BJ (cell line): ENCODE measurements at regions of chr1 and their contacts with region 1.

Region 1: GRCh38 chr1:241611063-241611462 is 29.1 kb downstream of the CHML start:
- DNase-seq: no peak
- H3K4me3 ChIP-seq: no peak overlapping the region
- H3K27me3 ChIP-seq: no peaks in the 10 kb centered on the region
- CTCF ChIP-seq: peak; percentile 54

Region 2: DNA sequence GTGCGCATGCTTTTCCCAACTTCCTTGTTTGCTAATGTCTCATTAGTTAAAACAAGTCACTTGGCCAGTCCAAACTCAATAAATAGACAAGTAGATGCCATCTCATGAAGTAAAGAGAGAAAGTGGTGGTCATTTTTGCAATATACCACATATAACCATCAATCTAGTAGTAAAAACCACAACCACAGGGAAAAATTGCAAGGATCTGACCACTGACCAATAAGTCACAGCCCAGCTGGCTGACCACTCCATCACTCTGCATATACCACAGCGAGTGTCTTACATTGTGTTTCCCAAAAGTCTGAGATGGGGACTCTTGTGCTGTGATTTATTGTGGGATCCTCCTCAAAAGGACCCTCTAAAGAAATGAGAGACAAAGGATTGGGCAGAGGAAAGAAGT is 167.5 kb before region 1 on chr1:
- CTCF ChIA-PET with region 1: no interaction called
- POLR2A ChIA-PET with region 1: no interaction called
- DNase-seq: no peak
- H3K4me3 ChIP-seq: no peak overlapping the region
- H3K27me3 ChIP-seq: no peaks in the 10 kb centered on the region
- CTCF ChIP-seq: no peak

Region 3: GRCh38 chr1:241460098-241460873 is 150.8 kb before region 1 on chr1:
- CTCF ChIA-PET with region 1: no interaction called
- POLR2A ChIA-PET with region 1: no interaction called
- DNase-seq: no peak
- H3K4me3 ChIP-seq: no peak overlapping the region
- H3K27me3 ChIP-seq: no peaks in the 10 kb centered on the region
- CTCF ChIP-seq: no peak

Region 4: GRCh38 chr1:241536304-241536703 is 74.8 kb before region 1 on chr1:
- CTCF ChIA-PET with region 1: interaction called, 14 read pairs
- POLR2A ChIA-PET with region 1: no interaction called
- DNase-seq: no peak
- H3K4me3 ChIP-seq: no peak overlapping the region
- H3K27me3 ChIP-seq: no peaks in the 10 kb centered on the region
- CTCF ChIP-seq: no peak

Region 5: DNA sequence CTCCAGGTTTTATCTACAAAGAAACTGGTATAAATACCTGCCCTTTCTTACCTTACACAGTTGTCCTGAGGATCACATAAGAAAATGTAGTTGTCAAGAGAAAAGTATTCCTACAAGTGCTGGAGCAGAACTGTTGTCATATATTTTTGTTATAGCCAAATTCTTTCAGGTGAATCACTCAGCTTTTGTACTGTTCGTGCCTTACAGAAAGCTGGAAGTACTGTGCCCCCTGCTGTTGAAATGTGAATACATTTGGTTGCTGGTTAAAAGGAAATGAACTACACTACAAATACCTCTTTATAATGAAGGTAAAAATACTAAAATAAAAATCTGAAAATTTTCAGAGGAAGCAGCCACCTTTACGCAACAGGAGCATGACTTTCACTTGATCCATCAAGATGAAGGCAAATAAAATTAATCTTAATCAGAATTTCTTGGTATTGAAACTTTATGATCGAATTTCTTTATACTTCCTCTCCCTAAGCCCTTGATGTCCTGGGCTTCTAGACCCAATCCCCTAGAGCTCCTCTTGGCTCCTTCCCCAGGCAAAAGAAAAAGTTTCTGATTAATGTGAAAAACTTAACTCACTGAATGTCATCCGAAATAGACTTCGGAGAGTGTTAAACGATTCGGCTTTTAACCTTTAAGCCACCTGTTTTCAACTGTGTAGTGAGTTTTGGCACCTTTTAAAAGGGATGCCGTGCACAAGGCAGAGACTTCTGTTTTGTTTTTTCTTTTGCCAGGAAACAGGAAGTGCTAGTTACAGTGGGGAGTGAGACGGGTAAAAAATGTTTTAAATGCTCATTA is 16.6 kb after region 1 on chr1:
- CTCF ChIA-PET with region 1: interaction called, 24 read pairs
- POLR2A ChIA-PET with region 1: no interaction called
- DNase-seq: no peak
- H3K4me3 ChIP-seq: no peak overlapping the region
- H3K27me3 ChIP-seq: no peaks in the 10 kb centered on the region
- CTCF ChIP-seq: peak; percentile 71

Region 6: DNA sequence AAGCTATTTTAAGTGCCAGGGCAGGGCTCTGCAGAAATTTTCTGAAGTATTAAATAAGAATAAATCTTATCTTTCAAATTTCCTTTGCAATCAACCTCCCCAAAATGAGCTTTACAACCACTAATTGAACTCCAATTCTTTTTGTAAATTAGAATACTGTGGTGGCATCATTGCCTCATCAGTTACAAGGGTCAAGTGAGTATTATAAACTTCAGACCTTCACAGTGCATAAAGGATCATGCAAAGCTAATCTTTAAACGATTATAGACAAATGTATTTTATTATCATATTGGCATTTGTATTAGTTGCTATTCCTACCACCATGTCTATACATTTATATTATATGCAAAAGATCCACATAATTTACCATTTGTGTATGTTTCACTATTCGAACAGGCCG is 21.9 kb after region 1 on chr1:
- CTCF ChIA-PET with region 1: interaction called, 24 read pairs
- POLR2A ChIA-PET with region 1: no interaction called
- DNase-seq: no peak
- H3K4me3 ChIP-seq: no peak overlapping the region
- H3K27me3 ChIP-seq: no peaks in the 10 kb centered on the region
- CTCF ChIP-seq: no peak

Region 7: GRCh38 chr1:241722947-241723346 is 111.9 kb after region 1 on chr1:
- CTCF ChIA-PET with region 1: no interaction called
- POLR2A ChIA-PET with region 1: no interaction called
- DNase-seq: no peak
- H3K4me3 ChIP-seq: no peak overlapping the region
- H3K27me3 ChIP-seq: peaks cover 2% of the 10 kb centered on the region; the same call in 1 of the 2 replicates
- CTCF ChIP-seq: no peak

Region 8: GRCh38 chr1:241817261-241817792 is 206.3 kb after region 1 on chr1:
- CTCF ChIA-PET with region 1: interaction called, 13 read pairs
- POLR2A ChIA-PET with region 1: interaction called, 3 read pairs
- DNase-seq: peak; percentile 78
- H3K4me3 ChIP-seq: no peak overlapping the region
- H3K27me3 ChIP-seq: no peaks in the 10 kb centered on the region
- CTCF ChIP-seq: no peak

Region 9: GRCh38 chr1:241834733-241835377 is 223.8 kb after region 1 on chr1:
- CTCF ChIA-PET with region 1: interaction called, 37 read pairs
- POLR2A ChIA-PET with region 1: no interaction called
- DNase-seq: no peak
- H3K4me3 ChIP-seq: no peak overlapping the region
- H3K27me3 ChIP-seq: no peaks in the 10 kb centered on the region
- CTCF ChIP-seq: peak; percentile 81

Region 10: DNA sequence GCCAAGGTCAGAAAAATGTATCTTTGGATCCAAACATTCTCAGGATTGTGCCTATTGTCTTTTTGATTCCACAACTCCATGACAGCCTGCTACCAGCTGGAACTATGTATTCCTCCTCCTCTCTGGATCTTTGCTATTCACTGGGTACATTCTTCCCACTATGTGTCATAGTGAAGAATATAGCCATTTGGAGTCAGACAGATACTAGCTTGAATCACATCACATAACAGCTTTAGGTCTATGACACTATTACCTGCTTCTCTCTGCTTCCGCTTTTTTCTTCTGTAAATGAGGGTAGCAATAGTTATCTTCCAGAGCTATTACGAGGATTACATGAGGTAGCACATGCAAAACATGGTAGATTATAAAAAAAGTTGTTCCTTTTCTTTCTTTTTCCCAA is 231.5 kb after region 1 on chr1:
- CTCF ChIA-PET with region 1: interaction called, 16 read pairs
- POLR2A ChIA-PET with region 1: no interaction called
- DNase-seq: no peak
- H3K4me3 ChIP-seq: no peak overlapping the region
- H3K27me3 ChIP-seq: no peaks in the 10 kb centered on the region
- CTCF ChIP-seq: no peak